Activated CD4-positive, alpha-beta memory T cell treated with anti-CD3 and anti-CD28 coated beads, Interleukin-2, amount 10 ng/mL, durations not matched to agents 7 days and 5 days (primary cell): ENCODE measurements at regions of chr5 and their contacts with region 1.

Region 1: GRCh38 chr5:159987031-159987674 is 21.8 kb upstream of the TTC1 start:
- DNase-seq: peak; percentile 78
- H3K4me3 Mint-ChIP-seq: peak overlapping the region; percentile 31
- H3K27ac Mint-ChIP-seq: no peak overlapping the region
- H3K4me1 Mint-ChIP-seq: peaks cover 2% of the 10 kb centered on the region
- H3K27me3 Mint-ChIP-seq: peaks cover 64% of the 10 kb centered on the region

Region 2: GRCh38 chr5:159286420-159287035 is 700.6 kb before region 1 on chr5:
- CTCF ChIA-PET with region 1: interaction called, 24 read pairs
- POLR2A ChIA-PET with region 1: no interaction called
- DNase-seq: no peak
- H3K4me3 Mint-ChIP-seq: no peak overlapping the region
- H3K27ac Mint-ChIP-seq: no peak overlapping the region
- H3K4me1 Mint-ChIP-seq: no peaks in the 10 kb centered on the region
- H3K27me3 Mint-ChIP-seq: no peaks in the 10 kb centered on the region

Region 3: GRCh38 chr5:159444441-159445082 is 542.6 kb before region 1 on chr5:
- CTCF ChIA-PET with region 1: interaction called, 27 read pairs
- POLR2A ChIA-PET with region 1: interaction called, 4 read pairs
- DNase-seq: no peak
- H3K4me3 Mint-ChIP-seq: no peak overlapping the region
- H3K27ac Mint-ChIP-seq: no peak overlapping the region
- H3K4me1 Mint-ChIP-seq: peaks cover 7% of the 10 kb centered on the region
- H3K27me3 Mint-ChIP-seq: peaks cover 59% of the 10 kb centered on the region

Region 4: DNA sequence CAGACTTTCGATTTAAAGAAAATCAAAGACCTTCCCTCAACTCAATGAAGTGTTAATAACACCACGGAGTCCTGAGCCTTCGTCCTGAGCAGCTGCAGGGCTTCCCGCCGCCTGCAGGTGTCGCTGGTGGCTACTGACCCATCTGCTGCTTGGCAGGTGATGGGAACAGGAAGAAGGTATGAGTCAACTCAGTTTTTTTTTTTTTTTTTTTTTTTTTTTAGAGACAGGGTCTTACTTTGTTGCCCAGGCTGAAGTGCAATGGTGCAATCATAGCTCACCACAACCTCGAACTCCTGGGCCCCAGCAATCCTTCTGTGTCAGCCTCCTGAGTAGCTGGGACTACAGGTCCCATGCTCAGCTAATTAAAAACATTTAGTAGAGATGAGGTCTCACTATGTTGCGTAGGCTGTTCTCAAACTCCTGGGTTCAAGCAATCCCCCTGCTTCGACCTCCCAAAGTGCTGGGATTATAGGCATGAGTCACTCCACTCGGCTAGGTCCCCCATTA is 471.2 kb before region 1 on chr5:
- CTCF ChIA-PET with region 1: interaction called, 33 read pairs
- POLR2A ChIA-PET with region 1: no interaction called
- DNase-seq: peak; percentile 82
- H3K4me3 Mint-ChIP-seq: no peak overlapping the region
- H3K27ac Mint-ChIP-seq: no peak overlapping the region
- H3K4me1 Mint-ChIP-seq: peaks cover 8% of the 10 kb centered on the region
- H3K27me3 Mint-ChIP-seq: peaks cover 17% of the 10 kb centered on the region

Region 5: DNA sequence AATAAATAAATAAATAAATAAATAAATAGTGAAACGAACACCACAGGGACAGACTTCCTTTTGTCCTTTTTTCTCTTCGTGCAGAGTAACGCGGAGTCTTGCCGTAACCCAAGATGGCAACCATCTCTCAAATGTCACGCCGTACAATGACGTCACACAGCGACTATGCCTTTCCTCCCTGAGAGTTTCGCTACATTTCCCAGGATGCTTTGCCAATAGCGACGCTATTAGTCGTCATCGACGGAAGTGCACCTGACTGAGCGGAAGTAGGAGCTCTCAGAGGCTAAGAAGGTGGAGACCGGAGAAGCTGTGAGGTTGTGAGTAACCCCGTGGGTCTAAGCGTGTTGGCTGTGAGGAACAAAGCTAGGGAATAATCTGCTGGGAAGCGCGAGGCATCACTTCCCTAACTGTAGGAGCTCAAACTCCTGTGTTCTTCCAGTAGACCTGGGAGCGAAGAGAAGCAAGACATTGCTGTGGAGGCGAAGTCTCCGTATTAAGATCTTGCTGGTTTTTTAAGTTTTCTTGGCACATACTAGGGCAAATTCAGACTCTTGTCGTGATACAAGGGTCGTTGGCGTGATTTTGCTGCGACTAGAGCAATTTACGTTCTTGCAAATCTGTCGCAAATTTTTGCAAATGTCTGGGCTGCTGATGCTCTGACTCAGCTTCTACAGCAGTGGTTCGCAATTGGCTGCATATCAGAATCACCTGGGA is 21.9 kb after region 1 on chr5 and contains the start of gene TTC1:
- CTCF ChIA-PET with region 1: interaction called, 12 read pairs
- POLR2A ChIA-PET with region 1: interaction called, 3 read pairs
- DNase-seq: peak; percentile 93
- H3K4me3 Mint-ChIP-seq: peak within 1 kb of the TSS; percentile 89
- H3K27ac Mint-ChIP-seq: peak within 1 kb of the TSS; percentile 95
- H3K4me1 Mint-ChIP-seq: peaks cover 27% of the 10 kb centered on the region
- H3K27me3 Mint-ChIP-seq: no peaks in the 10 kb centered on the region
- total RNA-seq, gene TTC1: 41.6 to 43.0 TPM